ENCODE measurements at regions of chr13 and their contacts with region 1.

Region 1: GRCh38 chr13:41222259-41222852 is 28.0 kb upstream of the KBTBD7 start:
- DNase-seq: peak in 5 of 10 donors; percentile 12 to 80 (median 33)

Region 2: GRCh38 chr13:41075034-41075433 is 147.3 kb before region 1 on chr13:
- intact Hi-C with region 1: loop called (anchors 2 kb)
- DNase-seq: peak in 1 of 10 donors; percentile 18